Endothelial cell of umbilical vein (primary cell): ENCODE measurements at regions of chr2 and their contacts with region 1.

Region 1: GRCh38 chr2:198127627-198128026 is 323.2 kb downstream of the PLCL1 start:
- DNase-seq: peak; percentile 73
- H3K4me3 ChIP-seq: no peak overlapping the region
- H3K27ac ChIP-seq: no peak overlapping the region
- H3K4me1 ChIP-seq: no peaks in the 10 kb centered on the region
- H3K27me3 ChIP-seq: no peaks in the 10 kb centered on the region
- CTCF ChIP-seq: peak; percentile 60 to 61
- POLR2A ChIP-seq: no peak

Region 2: GRCh38 chr2:197657562-197657961 is 470.1 kb before region 1 on chr2:
- CTCF ChIA-PET with region 1: no interaction called
- POLR2A ChIA-PET with region 1: no interaction called
- dilution Hi-C with region 1: no loop called
- intact Hi-C with region 1: no loop called
- DNase-seq: no peak
- H3K4me3 ChIP-seq: no peak overlapping the region
- H3K27ac ChIP-seq: no peak overlapping the region
- H3K4me1 ChIP-seq: no peaks in the 10 kb centered on the region
- H3K27me3 ChIP-seq: no peaks in the 10 kb centered on the region
- CTCF ChIP-seq: no peak
- POLR2A ChIP-seq: no peak

Region 3: DNA sequence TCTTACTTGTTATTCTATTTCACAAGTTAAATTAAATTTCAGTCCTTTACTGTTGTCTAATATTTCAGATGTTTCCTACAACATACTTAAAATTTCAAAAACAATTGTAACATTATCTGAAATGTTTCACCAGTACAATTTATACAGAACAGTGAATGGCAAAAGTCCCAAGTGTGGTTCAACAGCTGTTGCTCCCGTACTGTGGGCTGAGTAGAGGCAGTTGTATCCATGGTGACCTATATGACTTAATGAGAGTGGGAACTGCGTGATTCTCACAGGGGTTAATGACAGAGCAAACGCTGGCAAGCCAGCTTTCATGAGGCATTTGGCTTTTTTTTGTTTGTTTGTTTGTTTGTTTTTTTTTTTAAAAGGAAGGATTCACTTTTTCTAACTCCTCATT is 328.6 kb before region 1 on chr2:
- CTCF ChIA-PET with region 1: interaction called, 88 read pairs
- POLR2A ChIA-PET with region 1: no interaction called
- dilution Hi-C with region 1: no loop called
- intact Hi-C with region 1: loop called (anchors 1 kb)
- DNase-seq: no peak
- H3K4me3 ChIP-seq: no peak overlapping the region
- H3K27ac ChIP-seq: no peak overlapping the region
- H3K4me1 ChIP-seq: peaks cover 4% of the 10 kb centered on the region
- H3K27me3 ChIP-seq: peaks cover 2 to 5% of the 10 kb centered on the region in 2 experiments
- CTCF ChIP-seq: no peak
- POLR2A ChIP-seq: no peak

Region 4: DNA sequence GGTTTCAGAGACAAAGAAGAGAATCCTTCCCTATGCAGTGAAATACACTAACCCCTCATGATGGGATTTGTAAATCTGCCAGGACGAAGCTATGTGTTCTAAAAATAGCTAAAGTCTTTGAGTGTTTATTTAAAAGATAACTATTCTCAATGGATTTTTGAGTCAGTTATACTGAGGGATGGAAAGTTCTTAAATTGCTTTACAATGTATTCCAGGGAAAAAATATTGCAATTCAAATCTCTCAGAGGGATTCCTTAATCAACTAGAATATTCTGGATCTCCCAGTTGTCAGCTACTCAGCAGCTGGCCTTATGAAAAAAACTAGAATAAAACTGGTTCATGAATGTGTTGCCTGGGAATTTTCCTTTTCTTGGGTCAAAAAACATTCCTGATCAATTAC is 10.9 kb before region 1 on chr2:
- CTCF ChIA-PET with region 1: interaction called, 12 read pairs
- POLR2A ChIA-PET with region 1: no interaction called
- dilution Hi-C with region 1: no loop called
- intact Hi-C with region 1: no loop called
- DNase-seq: no peak
- H3K4me3 ChIP-seq: no peak overlapping the region
- H3K27ac ChIP-seq: no peak overlapping the region
- H3K4me1 ChIP-seq: peaks cover 11% of the 10 kb centered on the region
- H3K27me3 ChIP-seq: no peaks in the 10 kb centered on the region
- CTCF ChIP-seq: no peak
- POLR2A ChIP-seq: no peak

Region 5: GRCh38 chr2:198259496-198259895 is 131.9 kb after region 1 on chr2:
- CTCF ChIA-PET with region 1: no interaction called
- POLR2A ChIA-PET with region 1: no interaction called
- dilution Hi-C with region 1: no loop called
- intact Hi-C with region 1: no loop called
- DNase-seq: no peak
- H3K4me3 ChIP-seq: no peak overlapping the region
- H3K27ac ChIP-seq: no peak overlapping the region
- H3K4me1 ChIP-seq: no peaks in the 10 kb centered on the region
- H3K27me3 ChIP-seq: no peaks in the 10 kb centered on the region
- CTCF ChIP-seq: no peak
- POLR2A ChIP-seq: no peak